Caco-2 (cell line): ENCODE measurements at regions of chr20 and their contacts with region 1.

Region 1: DNA sequence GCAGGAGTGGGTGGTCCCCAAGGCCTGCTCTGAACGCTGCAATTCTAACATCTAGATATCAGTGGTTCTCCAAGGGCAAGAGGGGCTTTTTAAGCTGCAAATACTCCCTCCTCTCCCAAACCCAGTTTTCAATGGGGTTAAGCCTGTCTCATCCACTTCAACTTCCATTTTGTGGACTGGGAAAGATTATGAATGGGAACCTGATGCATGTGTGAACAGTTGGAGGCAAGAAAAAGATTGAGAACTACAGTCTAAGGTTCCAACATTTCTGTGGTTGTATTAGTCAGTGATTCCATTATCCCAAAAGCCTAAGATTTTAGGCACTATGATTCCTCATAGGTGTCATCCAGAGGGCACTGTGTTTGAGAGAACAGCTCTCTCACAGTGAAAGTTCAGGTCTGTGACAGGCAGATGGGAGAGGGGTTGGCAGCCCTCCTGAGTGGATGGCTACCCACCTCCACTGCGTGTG is 53.7 kb downstream of the HNF4A start:
- DNase-seq: no peak
- H3K4me3 ChIP-seq: no peak overlapping the region
- H3K4me3 Mint-ChIP-seq: no peak overlapping the region
- H3K27ac Mint-ChIP-seq: peak overlapping the region; percentile 86
- H3K4me1 ChIP-seq: peaks cover 97% of the 10 kb centered on the region
- H3K4me1 Mint-ChIP-seq: peaks cover 74% of the 10 kb centered on the region
- H3K27me3 ChIP-seq: no peaks in the 10 kb centered on the region
- H3K27me3 Mint-ChIP-seq: no peaks in the 10 kb centered on the region
- CTCF ChIP-seq: no peak

Region 2: GRCh38 chr20:44137210-44137801 is 271.9 kb before region 1 on chr20:
- CTCF ChIA-PET with region 1: no interaction called
- POLR2A ChIA-PET with region 1: no interaction called
- intact Hi-C with region 1: no loop called
- DNase-seq: peak; percentile 92 to 98
- H3K4me3 ChIP-seq: no peak overlapping the region
- H3K4me3 Mint-ChIP-seq: peak overlapping the region; percentile 55
- H3K27ac Mint-ChIP-seq: peak overlapping the region; percentile 82
- H3K4me1 ChIP-seq: peaks cover 47% of the 10 kb centered on the region
- H3K4me1 Mint-ChIP-seq: peaks cover 39% of the 10 kb centered on the region
- H3K27me3 ChIP-seq: no peaks in the 10 kb centered on the region
- H3K27me3 Mint-ChIP-seq: no peaks in the 10 kb centered on the region
- CTCF ChIP-seq: peak in 1 of 2 experiments; percentile 13

Region 3: GRCh38 chr20:44370639-44371220 is 38.4 kb before region 1 on chr20:
- CTCF ChIA-PET with region 1: no interaction called
- POLR2A ChIA-PET with region 1: no interaction called
- intact Hi-C with region 1: loop called (anchors 1 kb)
- DNase-seq: peak; percentile 98 to 99
- H3K4me3 ChIP-seq: no peak overlapping the region
- H3K4me3 Mint-ChIP-seq: peak overlapping the region; percentile 69
- H3K27ac Mint-ChIP-seq: peak overlapping the region; percentile 95
- H3K4me1 ChIP-seq: peaks cover 52% of the 10 kb centered on the region
- H3K4me1 Mint-ChIP-seq: peaks cover 47% of the 10 kb centered on the region
- H3K27me3 ChIP-seq: no peaks in the 10 kb centered on the region
- H3K27me3 Mint-ChIP-seq: no peaks in the 10 kb centered on the region
- CTCF ChIP-seq: peak in 1 of 2 experiments; percentile 13

Region 4: GRCh38 chr20:44435630-44436335 is 26.6 kb after region 1 on chr20:
- CTCF ChIA-PET with region 1: interaction called, 3 read pairs
- POLR2A ChIA-PET with region 1: no interaction called
- intact Hi-C with region 1: loop called (anchors 1 kb)
- DNase-seq: no peak
- H3K4me3 ChIP-seq: no peak overlapping the region
- H3K4me3 Mint-ChIP-seq: no peak overlapping the region
- H3K27ac Mint-ChIP-seq: peak overlapping the region; percentile 23
- H3K4me1 ChIP-seq: peaks cover 19% of the 10 kb centered on the region
- H3K4me1 Mint-ChIP-seq: peaks cover 7% of the 10 kb centered on the region
- H3K27me3 ChIP-seq: no peaks in the 10 kb centered on the region
- H3K27me3 Mint-ChIP-seq: no peaks in the 10 kb centered on the region
- CTCF ChIP-seq: no peak

Region 5: GRCh38 chr20:44477151-44477550 is 68.0 kb after region 1 on chr20:
- CTCF ChIA-PET with region 1: no interaction called
- POLR2A ChIA-PET with region 1: no interaction called
- intact Hi-C with region 1: no loop called
- DNase-seq: no peak
- H3K4me3 ChIP-seq: no peak overlapping the region
- H3K4me3 Mint-ChIP-seq: peak overlapping the region; percentile 98
- H3K27ac Mint-ChIP-seq: no peak overlapping the region
- H3K4me1 ChIP-seq: peaks cover 19% of the 10 kb centered on the region
- H3K4me1 Mint-ChIP-seq: peaks cover 25% of the 10 kb centered on the region
- H3K27me3 ChIP-seq: no peaks in the 10 kb centered on the region
- H3K27me3 Mint-ChIP-seq: no peaks in the 10 kb centered on the region
- CTCF ChIP-seq: no peak